ENCODE measurements at regions of chr11 and their contacts with region 1.

Region 1: DNA sequence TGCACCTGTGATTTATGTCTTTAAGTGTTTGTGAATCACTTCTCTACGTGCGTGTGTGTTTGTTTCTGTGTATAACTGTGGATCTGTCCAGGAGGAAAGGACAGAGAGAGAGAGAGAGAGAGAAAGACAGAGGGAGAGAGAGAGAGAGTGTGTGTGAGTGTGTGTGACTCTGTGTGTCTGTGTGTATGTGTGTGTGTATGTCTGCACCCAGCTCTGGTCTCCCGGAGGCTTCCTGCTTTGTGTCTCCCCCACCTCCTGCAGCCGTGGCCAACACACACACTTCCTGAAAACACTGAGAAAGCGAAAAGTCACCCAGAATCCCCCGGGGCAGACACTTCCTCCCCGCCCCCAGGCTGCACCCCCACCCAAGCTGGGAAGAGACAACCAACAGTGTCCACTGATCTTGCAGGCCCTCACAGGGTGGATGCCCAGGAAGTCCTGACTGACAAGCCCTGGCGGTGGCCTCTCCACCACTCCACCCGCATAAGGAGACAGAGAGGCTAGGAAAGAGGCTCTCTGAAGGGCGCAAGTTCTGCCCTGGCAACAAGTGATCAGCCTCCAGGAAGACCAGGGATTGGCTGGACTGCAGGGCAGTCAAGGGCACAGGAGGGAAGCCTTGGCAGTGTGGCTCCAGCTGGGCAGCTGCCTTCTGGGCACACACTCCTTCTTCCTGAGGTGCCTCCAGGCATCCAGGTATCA is 30.0 kb downstream of the ARAP1 start:
- DNase-seq: peak; percentile 95
- H3K4me3 ChIP-seq: peak overlapping the region; percentile 29 to 70 (median 55)
- H3K27ac ChIP-seq: peak overlapping the region; percentile 83
- H3K4me1 ChIP-seq: peaks cover 25% of the 10 kb centered on the region
- H3K27me3 ChIP-seq: no peaks in the 10 kb centered on the region
- CTCF ChIP-seq: no peak
- POLR2A ChIP-seq: peak; percentile 88

Region 2: DNA sequence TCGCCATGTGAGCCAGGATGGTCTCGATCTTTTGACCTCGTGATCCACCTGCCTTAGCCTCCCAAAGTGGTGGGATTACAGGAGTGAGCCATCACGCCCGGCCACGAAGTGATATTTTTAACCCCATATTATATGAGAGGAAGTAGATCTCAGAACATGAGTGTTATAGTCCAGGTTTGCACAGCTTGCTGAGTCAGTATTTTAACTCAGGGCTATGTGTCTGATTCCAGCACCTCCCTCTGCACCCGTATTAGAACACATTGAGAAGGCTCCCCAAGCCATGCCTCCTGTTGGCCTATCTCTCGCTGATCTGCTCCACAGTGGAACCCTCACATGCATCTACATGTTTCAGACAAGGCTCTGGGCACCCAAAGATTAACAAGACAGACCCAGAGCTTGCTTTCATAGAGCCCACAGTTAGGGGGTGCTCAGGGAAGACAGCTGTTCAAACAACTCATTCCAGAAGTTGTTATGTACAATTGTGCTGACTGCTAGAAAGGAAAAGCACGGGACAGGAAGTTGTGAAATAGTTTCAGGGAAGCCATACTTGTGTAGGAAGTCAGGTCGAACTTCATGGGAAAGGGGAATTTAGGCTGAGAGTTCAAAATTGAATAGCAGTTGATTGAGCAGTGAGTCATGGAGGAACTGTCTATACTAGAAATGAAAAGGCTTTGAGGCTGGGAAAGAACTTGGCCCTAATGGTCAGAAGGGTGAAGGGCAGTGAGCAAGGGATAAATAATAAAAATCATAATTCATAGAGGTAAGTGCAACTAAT is 238.6 kb before region 1 on chr11:
- CTCF ChIA-PET with region 1: no interaction called
- POLR2A ChIA-PET with region 1: no interaction called
- dilution Hi-C with region 1: no loop called
- intact Hi-C with region 1: no loop called
- DNase-seq: peak; percentile 92
- H3K4me3 ChIP-seq: no peak overlapping the region
- H3K27ac ChIP-seq: peak overlapping the region; percentile 55
- H3K4me1 ChIP-seq: peaks cover 10% of the 10 kb centered on the region
- H3K27me3 ChIP-seq: peaks cover 10 to 11% of the 10 kb centered on the region in 2 experiments
- CTCF ChIP-seq: no peak
- POLR2A ChIP-seq: no peak

Region 3: GRCh38 chr11:72736452-72737069 is 14.4 kb after region 1 on chr11:
- CTCF ChIA-PET with region 1: interaction called, 13 read pairs
- POLR2A ChIA-PET with region 1: no interaction called
- dilution Hi-C with region 1: no loop called
- intact Hi-C with region 1: no loop called
- DNase-seq: peak; percentile 47
- H3K4me3 ChIP-seq: no peak overlapping the region
- H3K27ac ChIP-seq: peak overlapping the region; percentile 69
- H3K4me1 ChIP-seq: peaks cover 20% of the 10 kb centered on the region
- H3K27me3 ChIP-seq: no peaks in the 10 kb centered on the region
- CTCF ChIP-seq: no peak
- POLR2A ChIP-seq: no peak

Region 4: GRCh38 chr11:72787216-72788104 is 65.3 kb after region 1 on chr11:
- CTCF ChIA-PET with region 1: interaction called, 136 read pairs
- POLR2A ChIA-PET with region 1: interaction called, 4 read pairs
- dilution Hi-C with region 1: no loop called
- intact Hi-C with region 1: no loop called
- DNase-seq: no peak
- H3K4me3 ChIP-seq: no peak overlapping the region
- H3K27ac ChIP-seq: no peak overlapping the region
- H3K4me1 ChIP-seq: no peaks in the 10 kb centered on the region
- H3K27me3 ChIP-seq: no peaks in the 10 kb centered on the region
- CTCF ChIP-seq: no peak
- POLR2A ChIP-seq: no peak

Region 5: DNA sequence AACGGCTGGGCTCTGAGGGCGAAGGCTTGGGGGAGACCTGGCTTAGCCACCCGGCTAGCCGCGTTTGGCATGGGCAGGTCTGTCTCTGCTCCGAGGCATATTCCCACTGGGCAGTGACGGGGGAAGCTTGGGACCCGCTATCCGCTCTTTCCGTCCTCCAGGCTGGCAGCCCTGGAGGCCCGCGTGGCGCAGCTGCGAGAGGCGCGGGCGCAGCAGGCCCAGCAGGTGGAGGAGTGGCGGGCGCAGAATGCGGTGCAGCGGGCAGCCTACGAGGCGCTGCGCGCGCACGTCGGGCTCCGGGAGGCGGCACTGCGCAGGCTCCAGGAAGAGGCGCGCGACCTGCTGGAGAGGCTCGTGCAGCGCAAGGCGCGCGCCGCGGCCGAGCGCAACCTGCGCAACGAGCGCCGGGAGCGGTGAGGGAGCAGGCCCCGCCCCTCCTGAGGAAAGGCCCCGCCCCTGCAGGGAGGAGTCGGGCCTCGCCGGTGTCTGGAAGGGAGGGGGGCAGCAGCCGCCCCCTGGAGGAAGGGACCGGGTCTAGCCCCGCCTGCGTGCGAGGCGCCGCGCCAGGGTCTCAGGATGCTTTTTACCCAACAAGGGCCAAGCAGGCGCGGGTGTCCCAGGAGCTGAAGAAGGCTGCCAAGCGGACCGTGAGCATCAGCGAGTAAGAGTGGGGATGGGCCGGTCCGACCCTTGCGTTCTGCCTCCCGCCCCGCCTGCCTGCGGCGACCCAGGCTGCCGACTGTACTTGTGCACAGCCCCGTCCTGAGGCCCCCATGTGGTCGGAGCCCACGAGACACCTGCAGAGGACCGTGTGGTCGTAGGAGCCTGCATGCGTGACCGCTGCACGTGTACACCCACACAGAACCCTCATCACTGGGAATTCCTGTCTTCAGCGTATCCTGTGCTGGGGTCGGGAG is 99.9 kb after region 1 on chr11:
- CTCF ChIA-PET with region 1: interaction called, 33 read pairs
- POLR2A ChIA-PET with region 1: no interaction called
- dilution Hi-C with region 1: no loop called
- intact Hi-C with region 1: loop called (anchors 1 kb)
- DNase-seq: peak; percentile 91
- H3K4me3 ChIP-seq: peak overlapping the region in 2 of 3 experiments; percentile 42 to 43
- H3K27ac ChIP-seq: no peak overlapping the region
- H3K4me1 ChIP-seq: peaks cover 7% of the 10 kb centered on the region
- H3K27me3 ChIP-seq: no peaks in the 10 kb centered on the region
- CTCF ChIP-seq: peak; percentile 2 to 23
- POLR2A ChIP-seq: no peak

Region 6: DNA sequence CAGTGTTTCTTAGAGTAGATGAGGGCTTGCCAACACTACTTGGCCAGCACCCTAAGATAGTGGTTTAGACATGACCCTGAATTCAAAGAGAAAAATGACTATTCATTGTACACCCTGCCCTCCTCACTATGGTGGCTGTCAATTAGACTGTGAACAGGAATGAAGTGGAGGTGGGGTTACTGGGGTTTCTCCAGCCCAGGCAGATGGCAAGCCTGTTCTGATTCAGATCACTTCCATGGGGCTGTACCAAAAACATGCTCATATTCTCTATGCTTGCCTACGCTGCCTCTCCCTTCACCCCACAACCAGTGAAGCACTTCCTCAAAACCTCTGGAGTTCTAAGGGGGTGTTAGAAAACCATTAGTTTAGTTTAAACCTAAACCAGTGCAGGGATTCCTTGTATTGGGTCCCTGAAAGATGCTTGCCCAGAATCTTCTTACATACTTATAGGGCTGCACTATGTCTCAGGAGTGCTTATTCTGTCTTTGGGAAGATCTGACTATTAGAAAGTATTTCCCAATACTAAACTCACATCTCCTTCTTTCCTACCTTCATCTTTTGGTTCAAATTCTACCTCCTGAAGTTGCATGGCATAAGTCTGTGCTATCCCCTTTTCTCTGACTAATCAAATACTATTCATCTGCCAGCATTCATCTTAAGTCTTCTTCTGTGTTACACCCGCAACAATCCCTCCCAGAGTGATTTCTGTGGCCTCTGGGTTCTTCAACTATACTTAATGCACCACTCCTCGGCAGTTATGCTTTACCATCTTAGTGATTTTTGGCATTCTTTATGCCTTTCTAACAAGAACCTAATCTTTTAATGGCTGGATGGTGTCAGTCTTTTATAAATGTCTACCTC is 163.8 kb after region 1 on chr11:
- CTCF ChIA-PET with region 1: no interaction called
- POLR2A ChIA-PET with region 1: no interaction called
- dilution Hi-C with region 1: no loop called
- intact Hi-C with region 1: no loop called
- DNase-seq: no peak
- H3K4me3 ChIP-seq: no peak overlapping the region
- H3K27ac ChIP-seq: no peak overlapping the region
- H3K4me1 ChIP-seq: no peaks in the 10 kb centered on the region
- H3K27me3 ChIP-seq: no peaks in the 10 kb centered on the region
- CTCF ChIP-seq: no peak
- POLR2A ChIP-seq: no peak

Region 7: GRCh38 chr11:73085189-73085875 is 363.1 kb after region 1 on chr11:
- CTCF ChIA-PET with region 1: no interaction called
- POLR2A ChIA-PET with region 1: no interaction called
- dilution Hi-C with region 1: no loop called
- intact Hi-C with region 1: no loop called
- DNase-seq: no peak
- H3K4me3 ChIP-seq: no peak overlapping the region
- H3K27ac ChIP-seq: no peak overlapping the region
- H3K4me1 ChIP-seq: no peaks in the 10 kb centered on the region
- H3K27me3 ChIP-seq: no peaks in the 10 kb centered on the region
- CTCF ChIP-seq: no peak
- POLR2A ChIP-seq: no peak

Region 8: DNA sequence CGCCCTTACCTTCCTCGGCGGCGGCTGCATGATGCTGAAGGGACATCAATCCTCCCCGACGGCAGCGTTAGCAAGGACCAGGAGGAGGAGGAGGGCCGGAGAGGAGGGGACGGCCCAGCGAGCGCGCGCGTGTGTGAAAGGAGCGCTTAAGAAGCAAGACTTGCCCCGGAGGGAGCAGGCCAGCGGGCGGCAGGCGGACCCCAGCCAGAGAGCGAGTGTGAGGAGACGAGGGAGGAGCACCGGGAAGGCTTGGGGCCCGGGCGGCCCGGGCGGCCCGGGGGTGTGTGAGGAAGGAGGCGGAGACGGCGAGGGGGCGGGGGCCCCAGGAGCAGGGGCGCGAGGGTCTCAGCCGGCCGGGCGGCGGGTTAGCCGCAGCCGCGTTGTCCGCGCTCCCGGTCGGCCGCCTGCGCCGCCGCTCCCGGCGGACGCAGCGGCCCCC is 419.7 kb after region 1 on chr11:
- CTCF ChIA-PET with region 1: interaction called, 10 read pairs
- POLR2A ChIA-PET with region 1: no interaction called
- dilution Hi-C with region 1: no loop called
- intact Hi-C with region 1: no loop called
- DNase-seq: peak; percentile 79
- H3K4me3 ChIP-seq: peak overlapping the region; percentile 56 to 95 (median 90)
- H3K27ac ChIP-seq: peak overlapping the region; percentile 88
- H3K4me1 ChIP-seq: peaks cover 37% of the 10 kb centered on the region
- H3K27me3 ChIP-seq: no peaks in the 10 kb centered on the region
- CTCF ChIP-seq: no peak
- POLR2A ChIP-seq: no peak

Region 9: GRCh38 chr11:73236854-73237253 is 514.7 kb after region 1 on chr11:
- CTCF ChIA-PET with region 1: interaction called, 10 read pairs
- POLR2A ChIA-PET with region 1: no interaction called
- dilution Hi-C with region 1: no loop called
- intact Hi-C with region 1: loop called (anchors 1 kb)
- DNase-seq: peak; percentile 61
- H3K4me3 ChIP-seq: no peak overlapping the region
- H3K27ac ChIP-seq: no peak overlapping the region
- H3K4me1 ChIP-seq: peaks cover 7% of the 10 kb centered on the region
- H3K27me3 ChIP-seq: no peaks in the 10 kb centered on the region
- CTCF ChIP-seq: peak; percentile 65 to 81
- POLR2A ChIP-seq: no peak

Measured in endothelial cell of umbilical vein (primary cell).